CD8-positive, alpha-beta T cell (primary cell): ENCODE measurements at regions of chr2 and their contacts with region 1.

Region 1: GRCh38 chr2:171999604-172000469 is at the start of gene METAP1D:
- DNase-seq: peak; percentile 61 to 91 (median 81)
- ATAC-seq: peak; percentile 87
- H3K4me3 ChIP-seq: peak within 1 kb of the TSS; percentile 85 to 87
- H3K4me3 Mint-ChIP-seq: peak within 1 kb of the TSS; percentile 84
- H3K27ac ChIP-seq: peak within 1 kb of the TSS; percentile 57 to 69
- H3K27ac Mint-ChIP-seq: peak within 1 kb of the TSS; percentile 82
- H3K4me1 ChIP-seq: peaks cover 8% of the 10 kb centered on the region
- H3K4me1 Mint-ChIP-seq: peaks cover 23% of the 10 kb centered on the region
- H3K27me3 ChIP-seq: peaks cover 0 to 4% of the 10 kb centered on the region in 2 experiments
- H3K27me3 Mint-ChIP-seq: peaks cover 8% of the 10 kb centered on the region
- CTCF ChIP-seq: no peak
- total RNA-seq, gene METAP1D: 5.7 to 6.2 TPM

Region 2: DNA sequence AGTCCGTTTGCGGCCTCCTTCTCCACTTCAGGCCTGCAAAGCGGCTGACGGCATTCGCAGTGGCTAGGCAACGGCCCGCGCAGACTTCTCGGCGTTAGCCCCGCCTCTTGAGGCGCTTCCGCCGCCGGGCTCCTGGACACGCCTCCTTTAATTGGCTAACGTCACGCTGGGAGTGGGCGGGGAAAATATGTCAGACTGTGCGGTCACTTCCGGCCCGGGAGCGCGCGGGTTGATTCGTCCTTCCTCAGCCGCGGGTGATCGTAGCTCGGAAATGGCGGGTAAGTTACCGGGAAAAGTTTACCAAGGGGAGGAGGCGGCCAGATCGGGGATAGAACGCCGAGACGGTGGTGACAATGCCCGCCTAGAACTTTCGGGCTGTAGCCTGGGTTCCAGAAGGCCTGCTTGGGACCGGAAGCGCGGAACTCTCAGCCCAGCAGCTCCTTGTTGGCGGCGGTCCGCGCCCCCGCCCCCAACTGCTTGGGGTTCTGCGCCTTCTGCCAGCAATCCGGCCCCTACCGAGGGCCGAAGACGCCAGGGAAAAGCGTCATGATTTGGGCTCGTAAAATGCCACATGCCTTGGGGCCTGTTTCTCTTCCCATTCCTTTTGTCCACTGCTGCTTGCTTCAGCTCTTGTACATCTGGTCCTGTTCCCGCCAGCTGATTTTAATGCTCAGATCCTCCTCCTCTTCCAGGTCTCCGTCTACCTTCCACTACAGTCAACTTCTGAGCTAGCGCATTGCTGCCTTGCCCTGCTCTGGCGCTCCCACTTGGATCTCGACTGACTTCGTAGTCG is 77.4 kb before region 1 on chr2 and contains the start of gene HAT1:
- CTCF ChIA-PET with region 1: no interaction called
- POLR2A ChIA-PET with region 1: no interaction called
- intact Hi-C with region 1: loop called (anchors 1 kb)
- DNase-seq: peak; percentile 94 to 99 (median 97)
- ATAC-seq: peak; percentile 98
- H3K4me3 ChIP-seq: peak within 1 kb of the TSS; percentile 82 to 97
- H3K4me3 Mint-ChIP-seq: peak within 1 kb of the TSS; percentile 98
- H3K27ac ChIP-seq: peak within 1 kb of the TSS; percentile 94 to 96
- H3K27ac Mint-ChIP-seq: peak within 1 kb of the TSS; percentile 97
- H3K4me1 ChIP-seq: peaks cover 21% of the 10 kb centered on the region
- H3K4me1 Mint-ChIP-seq: peaks cover 45% of the 10 kb centered on the region
- H3K27me3 ChIP-seq: no peaks in the 10 kb centered on the region
- H3K27me3 Mint-ChIP-seq: no peaks in the 10 kb centered on the region
- CTCF ChIP-seq: no peak
- total RNA-seq, gene HAT1: 29.5 to 30.2 TPM